GM18951 (cell line): ENCODE measurements at regions of chr3 and their contacts with region 1.

Region 1: GRCh38 chr3:158097593-158098308 is 8.5 kb downstream of the SHOX2 start:
- POLR2A ChIP-seq: peak; percentile 75

Region 2: DNA sequence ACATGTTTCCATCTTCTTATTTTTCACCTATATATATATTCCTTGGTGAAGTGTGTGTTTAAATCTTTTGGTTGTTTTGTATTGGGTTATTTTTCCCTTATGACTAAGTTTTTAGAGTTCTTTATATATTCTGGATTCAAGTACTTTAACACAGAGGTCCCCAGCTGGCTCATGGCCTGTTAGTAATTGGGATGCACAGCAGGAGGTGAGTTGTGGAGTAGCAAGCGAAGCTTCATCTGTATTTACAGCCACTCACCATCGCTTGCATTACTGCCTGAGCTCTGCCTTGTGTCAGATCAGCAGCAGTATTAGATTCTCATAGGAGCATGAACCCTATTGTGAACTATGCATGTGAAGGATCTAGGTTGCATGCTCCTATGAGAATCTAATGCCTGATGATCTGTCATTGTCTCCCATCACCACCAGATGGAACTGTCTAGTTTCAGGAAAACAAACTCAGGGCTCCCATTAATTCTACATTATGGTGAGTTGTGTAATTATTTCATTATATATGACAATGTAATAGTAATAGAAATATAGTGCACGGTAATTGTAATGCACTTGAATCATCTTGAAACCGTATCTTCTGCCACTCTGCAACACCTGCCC is 163.7 kb after region 1 on chr3:
- in situ Hi-C with region 1: no loop called
- POLR2A ChIP-seq: no peak

Region 3: DNA sequence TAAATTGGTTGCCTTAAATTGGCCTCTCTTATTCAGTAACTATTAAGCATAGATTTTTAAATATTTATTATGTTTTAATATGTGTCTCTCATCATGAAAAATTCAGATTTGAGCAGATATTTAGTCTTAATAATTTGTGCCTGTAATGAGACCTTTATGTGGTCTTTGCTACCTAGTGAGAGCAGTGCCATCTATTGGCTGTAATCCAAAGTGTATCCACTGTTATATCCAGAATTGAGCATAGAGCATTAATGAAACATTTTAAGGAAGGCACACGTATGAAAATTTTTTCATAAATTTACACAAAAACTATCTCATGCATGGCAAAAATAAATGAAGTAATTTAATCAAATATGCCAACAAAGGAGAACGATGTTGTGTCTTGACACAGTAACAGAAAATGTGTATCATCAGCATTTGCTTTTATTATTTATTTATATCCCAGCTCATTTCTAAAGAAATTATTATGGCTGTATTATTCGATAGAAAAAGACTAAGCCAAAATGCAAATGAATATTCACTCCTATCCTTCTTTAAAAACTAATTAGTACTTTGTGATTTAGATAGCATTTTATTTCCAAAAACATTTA is 215.7 kb after region 1 on chr3:
- in situ Hi-C with region 1: no loop called
- POLR2A ChIP-seq: no peak

Region 4: DNA sequence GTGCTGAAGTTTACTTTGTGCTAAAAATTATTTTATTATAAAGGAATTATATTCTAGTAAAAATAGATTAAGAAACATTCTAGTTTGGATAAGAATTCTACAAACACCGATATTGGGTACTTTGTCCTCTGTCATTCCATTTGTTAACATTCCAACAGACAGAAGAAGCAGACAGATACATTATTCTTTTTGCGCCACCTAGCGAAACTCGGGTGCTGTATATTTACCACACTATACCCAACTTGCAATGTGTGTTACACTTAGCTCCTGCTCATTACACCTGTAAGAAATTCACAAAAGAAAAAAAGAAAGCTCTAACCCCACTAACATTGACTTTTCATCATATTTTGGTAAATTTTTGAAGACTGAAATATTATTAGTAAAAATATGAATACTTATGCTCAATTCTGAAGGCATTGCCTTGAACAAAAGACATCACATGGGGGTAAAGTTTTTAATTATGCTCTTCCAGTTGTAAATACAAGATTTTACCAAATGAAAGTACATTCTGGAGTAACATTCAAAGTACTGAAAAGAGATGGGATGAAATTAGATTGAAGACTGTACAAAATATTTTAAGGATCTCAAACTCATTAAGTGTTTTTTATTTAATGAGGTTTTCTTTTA is 336.8 kb after region 1 on chr3:
- in situ Hi-C with region 1: loop called (anchors 10 kb)
- POLR2A ChIP-seq: no peak